ENCODE measurements at regions of chr3 and their contacts with region 1.

Region 1: DNA sequence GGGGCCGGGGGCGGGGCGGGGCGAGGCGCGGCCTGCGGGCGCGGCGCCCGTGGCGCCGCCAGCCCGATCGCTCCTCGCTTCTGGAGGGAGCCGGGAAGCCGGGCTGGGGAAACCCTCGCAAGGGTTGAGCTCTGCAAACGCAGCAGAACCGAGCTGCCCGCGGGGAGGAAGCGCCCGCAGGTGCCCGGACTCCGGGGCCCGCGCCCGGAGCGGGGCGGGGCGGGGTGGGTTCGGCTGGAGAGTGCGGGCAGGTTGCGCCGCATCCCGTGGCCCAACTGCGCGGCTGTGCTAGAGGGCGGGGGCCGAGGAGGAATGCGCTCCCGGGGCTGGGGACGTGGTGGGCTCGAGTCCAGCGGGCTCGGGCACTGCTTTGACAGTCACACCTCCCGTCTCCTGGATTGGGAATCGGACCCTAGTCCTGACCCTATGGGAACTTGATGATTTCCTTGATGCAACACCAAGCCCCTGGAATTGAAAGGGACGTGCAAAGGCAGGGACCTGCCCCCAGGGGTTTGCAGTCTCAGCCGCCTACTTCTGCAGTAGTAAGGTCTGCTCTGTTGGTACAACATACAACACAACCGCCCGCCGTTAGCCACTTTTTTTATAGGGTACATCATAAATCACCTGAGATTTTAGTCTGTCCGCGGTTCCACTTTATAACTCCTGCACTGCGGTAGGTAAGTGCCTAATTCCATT is 34.3 kb downstream of the ZBTB38 start:
- DNase-seq: peak; percentile 33
- ATAC-seq: peak; percentile 77
- H3K4me3 ChIP-seq: peak overlapping the region; percentile 62 to 79 (median 77)
- H3K27ac ChIP-seq: peak overlapping the region; percentile 90
- H3K4me1 ChIP-seq: peaks cover 52% of the 10 kb centered on the region
- H3K27me3 ChIP-seq: no peaks in the 10 kb centered on the region; a peak in 1 of 5 replicates
- CTCF ChIP-seq: no peak
- EP300 ChIP-seq: no peak
- POLR2A ChIP-seq: 0 out of 4 replicates have a peak, but pooled peaks of 1 of the 2 experiments have one; percentile 40
- RAD21 ChIP-seq: no peak

Region 2: DNA sequence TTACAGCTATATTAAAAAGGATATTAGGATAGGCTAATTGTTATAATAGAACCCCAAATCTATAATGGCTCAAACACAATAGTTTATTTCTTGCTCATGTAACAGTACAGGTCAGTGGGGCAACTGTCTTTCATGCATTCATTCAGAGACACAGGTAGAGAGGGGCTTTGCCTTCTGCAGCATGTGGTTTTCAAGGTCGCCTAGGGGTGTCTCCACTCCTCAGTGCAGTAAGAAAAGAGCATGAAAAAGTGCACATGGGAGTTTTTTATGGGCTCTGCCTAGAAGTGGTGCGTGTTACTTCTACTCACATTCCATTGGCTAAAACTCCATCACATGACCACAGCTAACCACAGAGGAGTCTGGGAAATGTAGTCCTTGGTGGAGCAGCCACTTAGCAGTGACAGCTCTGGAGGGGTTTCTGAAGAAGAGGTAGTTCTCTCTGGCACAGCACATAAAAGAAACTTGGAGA is 32.5 kb before region 1 on chr3:
- CTCF ChIA-PET with region 1: no interaction called
- POLR2A ChIA-PET with region 1: interaction called, 21 read pairs
- in situ Hi-C with region 1: loop called (anchors 5 kb)
- intact Hi-C with region 1: loop called (anchors 1 kb)
- DNase-seq: peak; percentile 94
- ATAC-seq: peak; percentile 76
- H3K4me3 ChIP-seq: peak overlapping the region in 2 of 3 experiments; percentile 50 to 73; a peak in 2 of 6 replicates
- H3K27ac ChIP-seq: peak overlapping the region; percentile 98
- H3K4me1 ChIP-seq: peaks cover 79% of the 10 kb centered on the region
- H3K27me3 ChIP-seq: no peaks in the 10 kb centered on the region
- CTCF ChIP-seq: peak; percentile 66
- EP300 ChIP-seq: peak in 1 of 2 experiments; percentile 28; a peak in 2 of 4 replicates
- POLR2A ChIP-seq: peak in 1 of 2 experiments; percentile 46; a peak in 2 of 4 replicates
- RAD21 ChIP-seq: peak; percentile 45; the same call in 1 of the 2 replicates

Region 3: GRCh38 chr3:141441381-141442364 is 39.0 kb after region 1 on chr3:
- CTCF ChIA-PET with region 1: no interaction called
- POLR2A ChIA-PET with region 1: interaction called, 4 read pairs
- in situ Hi-C with region 1: loop called (anchors 5 kb)
- intact Hi-C with region 1: no loop called
- DNase-seq: peak; percentile 57
- ATAC-seq: peak; percentile 98
- H3K4me3 ChIP-seq: no peak overlapping the region
- H3K27ac ChIP-seq: peak overlapping the region; percentile 66
- H3K4me1 ChIP-seq: peaks cover 32% of the 10 kb centered on the region
- H3K27me3 ChIP-seq: no peaks in the 10 kb centered on the region
- CTCF ChIP-seq: peak; percentile 81
- EP300 ChIP-seq: no peak
- POLR2A ChIP-seq: no peak
- RAD21 ChIP-seq: peak; percentile 58

Region 4: GRCh38 chr3:141507392-141508066 is 104.9 kb after region 1 on chr3:
- CTCF ChIA-PET with region 1: no interaction called
- POLR2A ChIA-PET with region 1: no interaction called
- in situ Hi-C with region 1: no loop called
- intact Hi-C with region 1: no loop called
- DNase-seq: no peak
- ATAC-seq: no peak
- H3K4me3 ChIP-seq: no peak overlapping the region
- H3K27ac ChIP-seq: no peak overlapping the region
- H3K4me1 ChIP-seq: peaks cover 42% of the 10 kb centered on the region
- H3K27me3 ChIP-seq: no peaks in the 10 kb centered on the region
- CTCF ChIP-seq: no peak
- EP300 ChIP-seq: no peak
- POLR2A ChIP-seq: no peak
- RAD21 ChIP-seq: no peak

Region 5: GRCh38 chr3:141777957-141778813 is 375.6 kb after region 1 on chr3:
- CTCF ChIA-PET with region 1: no interaction called
- POLR2A ChIA-PET with region 1: no interaction called
- in situ Hi-C with region 1: no loop called
- intact Hi-C with region 1: no loop called
- DNase-seq: no peak
- ATAC-seq: no peak
- H3K4me3 ChIP-seq: no peak overlapping the region
- H3K27ac ChIP-seq: no peak overlapping the region
- H3K4me1 ChIP-seq: no peaks in the 10 kb centered on the region
- H3K27me3 ChIP-seq: peaks cover 0 to 3% of the 10 kb centered on the region in 2 experiments; a peak in 1 of 5 replicates
- CTCF ChIP-seq: no peak
- EP300 ChIP-seq: no peak
- POLR2A ChIP-seq: no peak
- RAD21 ChIP-seq: no peak